PC-9 (cell line): ENCODE measurements at regions of chr11 and their contacts with region 1.

Region 1: GRCh38 chr11:129192156-129192555 is at the start of gene ARHGAP32:
- DNase-seq: peak; percentile 44 to 85
- H3K4me3 ChIP-seq: peak within 1 kb of the TSS; percentile 54
- H3K27ac ChIP-seq: peak within 1 kb of the TSS; percentile 86
- H3K4me1 ChIP-seq: peaks cover 39% of the 10 kb centered on the region
- H3K27me3 ChIP-seq: no peaks in the 10 kb centered on the region
- CTCF ChIP-seq: no peak
- total RNA-seq, gene ARHGAP32: 31.1 and 35.1 TPM in 2 replicates

Region 2: GRCh38 chr11:128506999-128507611 is 685.1 kb before region 1 on chr11:
- CTCF ChIA-PET with region 1: no interaction called
- POLR2A ChIA-PET with region 1: no interaction called
- intact Hi-C with region 1: loop called (anchors 5 kb)
- DNase-seq: peak; percentile 80 to 81
- H3K4me3 ChIP-seq: peak overlapping the region; percentile 46; the same call in 1 of the 2 replicates
- H3K27ac ChIP-seq: peak overlapping the region; percentile 85
- H3K4me1 ChIP-seq: peaks cover 62% of the 10 kb centered on the region
- H3K27me3 ChIP-seq: no peaks in the 10 kb centered on the region
- CTCF ChIP-seq: no peak

Region 3: GRCh38 chr11:129143335-129143734 is 48.8 kb before region 1 on chr11:
- CTCF ChIA-PET with region 1: no interaction called
- POLR2A ChIA-PET with region 1: no interaction called
- intact Hi-C with region 1: loop called (anchors 1 kb)
- DNase-seq: peak; percentile 88 to 98
- H3K4me3 ChIP-seq: peak overlapping the region; percentile 40; the same call in 1 of the 2 replicates
- H3K27ac ChIP-seq: peak overlapping the region; percentile 96
- H3K4me1 ChIP-seq: peaks cover 31% of the 10 kb centered on the region
- H3K27me3 ChIP-seq: no peaks in the 10 kb centered on the region
- CTCF ChIP-seq: no peak

Region 4: DNA sequence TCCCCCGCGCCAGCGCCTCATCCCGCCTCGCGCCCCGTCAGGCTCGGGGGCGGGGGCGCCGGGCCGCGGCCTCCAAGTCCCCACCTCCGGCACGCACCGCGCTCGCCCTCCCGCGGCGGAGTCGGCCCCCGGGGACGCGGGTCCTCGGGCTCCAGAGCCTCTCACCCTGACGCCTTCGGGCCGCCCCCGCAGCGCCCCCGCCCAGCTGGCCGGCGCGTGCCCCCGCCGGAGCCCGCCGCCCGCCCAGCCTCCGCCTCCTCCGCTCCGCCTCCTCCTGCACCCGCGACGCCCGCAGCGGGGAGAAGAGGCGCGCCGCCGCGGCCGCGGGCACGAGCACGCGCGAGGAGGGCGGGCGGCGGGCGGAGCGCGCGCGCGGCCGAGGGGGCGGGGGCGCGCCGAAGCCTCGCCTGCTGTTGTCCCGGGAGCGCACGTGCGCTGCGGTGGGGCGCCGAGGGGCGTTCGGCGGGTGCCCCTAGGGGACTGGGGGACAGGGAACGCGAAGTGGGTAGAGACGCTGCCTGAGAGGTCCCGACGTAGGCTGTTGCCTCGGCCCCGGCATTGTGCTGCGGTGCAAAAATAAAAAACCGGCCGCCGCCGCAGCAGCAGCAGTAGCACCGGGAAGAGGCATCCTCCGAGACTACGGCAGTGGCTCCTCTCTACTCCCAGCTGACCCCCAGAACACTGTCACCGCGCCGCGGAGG is 87.3 kb after region 1 on chr11:
- CTCF ChIA-PET with region 1: no interaction called
- POLR2A ChIA-PET with region 1: no interaction called
- intact Hi-C with region 1: loop called (anchors 5 kb)
- DNase-seq: peak; percentile 54 to 86
- H3K4me3 ChIP-seq: peak overlapping the region; percentile 70
- H3K27ac ChIP-seq: no peak overlapping the region
- H3K4me1 ChIP-seq: peaks cover 50% of the 10 kb centered on the region
- H3K27me3 ChIP-seq: no peaks in the 10 kb centered on the region
- CTCF ChIP-seq: no peak

Region 5: DNA sequence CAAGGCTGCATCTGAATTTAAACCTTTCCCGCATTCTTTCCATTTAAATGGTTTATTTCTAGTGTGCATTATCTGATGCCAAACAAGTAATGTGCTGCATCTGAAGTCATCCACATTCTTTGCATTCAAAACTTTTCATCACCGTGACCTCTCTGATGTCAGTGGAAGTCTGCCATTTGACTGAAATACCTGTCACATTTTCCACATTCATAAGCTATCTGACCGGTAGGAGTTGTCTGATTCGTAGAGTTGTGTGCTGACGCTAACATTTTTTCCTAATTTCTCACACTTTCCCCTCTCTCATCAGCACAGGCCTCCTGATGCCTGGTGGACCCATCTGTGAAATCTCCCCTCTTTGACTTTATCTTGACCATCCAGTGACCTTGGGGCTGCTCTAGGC is 103.6 kb after region 1 on chr11:
- CTCF ChIA-PET with region 1: no interaction called
- POLR2A ChIA-PET with region 1: no interaction called
- intact Hi-C with region 1: no loop called
- DNase-seq: peak in 1 of 2 experiments; percentile 17
- H3K4me3 ChIP-seq: no peak overlapping the region
- H3K27ac ChIP-seq: no peak overlapping the region
- H3K4me1 ChIP-seq: no peaks in the 10 kb centered on the region; the same call in 1 of the 2 replicates
- H3K27me3 ChIP-seq: no peaks in the 10 kb centered on the region
- CTCF ChIP-seq: no peak

Region 6: GRCh38 chr11:129315781-129316481 is 123.8 kb after region 1 on chr11:
- CTCF ChIA-PET with region 1: no interaction called
- POLR2A ChIA-PET with region 1: interaction called, 3 read pairs
- intact Hi-C with region 1: loop called (anchors 10 kb)
- DNase-seq: peak; percentile 75 to 90
- H3K4me3 ChIP-seq: peak overlapping the region; percentile 3; the same call in 1 of the 2 replicates
- H3K27ac ChIP-seq: peak overlapping the region; percentile 66
- H3K4me1 ChIP-seq: peaks cover 62% of the 10 kb centered on the region
- H3K27me3 ChIP-seq: no peaks in the 10 kb centered on the region
- CTCF ChIP-seq: no peak

Region 7: DNA sequence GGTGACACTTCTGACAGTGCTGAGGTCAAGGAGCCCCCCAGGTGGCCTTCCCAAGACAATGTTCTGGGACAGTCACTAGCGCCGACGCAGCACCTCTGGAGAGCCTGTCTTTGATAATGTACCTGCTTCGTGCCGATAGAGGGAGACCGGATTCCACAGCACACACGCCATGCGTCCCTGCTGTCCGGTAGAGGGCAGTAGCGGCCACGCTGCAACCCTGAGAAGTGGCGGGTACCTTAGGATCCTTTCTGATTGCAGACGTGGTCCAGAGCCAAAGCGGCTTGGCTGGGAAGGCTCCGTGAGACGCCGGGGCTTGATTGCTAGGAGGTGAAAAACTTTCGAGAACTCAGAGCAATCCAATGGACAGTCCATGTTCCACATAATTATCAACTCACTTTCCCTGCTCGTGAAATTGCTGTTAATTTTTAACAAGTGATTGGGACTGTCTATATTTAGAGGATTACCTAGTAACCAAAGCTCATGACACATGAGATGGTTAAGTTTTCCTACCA is 172.0 kb after region 1 on chr11:
- CTCF ChIA-PET with region 1: interaction called, 12 read pairs
- POLR2A ChIA-PET with region 1: no interaction called
- intact Hi-C with region 1: no loop called
- DNase-seq: peak; percentile 85 to 87
- H3K4me3 ChIP-seq: no peak overlapping the region
- H3K27ac ChIP-seq: no peak overlapping the region
- H3K4me1 ChIP-seq: peaks cover 42% of the 10 kb centered on the region
- H3K27me3 ChIP-seq: no peaks in the 10 kb centered on the region
- CTCF ChIP-seq: peak; percentile 97